Natural killer cell (primary cell): ENCODE measurements at regions of chr7 and their contacts with region 1.

Region 1: DNA sequence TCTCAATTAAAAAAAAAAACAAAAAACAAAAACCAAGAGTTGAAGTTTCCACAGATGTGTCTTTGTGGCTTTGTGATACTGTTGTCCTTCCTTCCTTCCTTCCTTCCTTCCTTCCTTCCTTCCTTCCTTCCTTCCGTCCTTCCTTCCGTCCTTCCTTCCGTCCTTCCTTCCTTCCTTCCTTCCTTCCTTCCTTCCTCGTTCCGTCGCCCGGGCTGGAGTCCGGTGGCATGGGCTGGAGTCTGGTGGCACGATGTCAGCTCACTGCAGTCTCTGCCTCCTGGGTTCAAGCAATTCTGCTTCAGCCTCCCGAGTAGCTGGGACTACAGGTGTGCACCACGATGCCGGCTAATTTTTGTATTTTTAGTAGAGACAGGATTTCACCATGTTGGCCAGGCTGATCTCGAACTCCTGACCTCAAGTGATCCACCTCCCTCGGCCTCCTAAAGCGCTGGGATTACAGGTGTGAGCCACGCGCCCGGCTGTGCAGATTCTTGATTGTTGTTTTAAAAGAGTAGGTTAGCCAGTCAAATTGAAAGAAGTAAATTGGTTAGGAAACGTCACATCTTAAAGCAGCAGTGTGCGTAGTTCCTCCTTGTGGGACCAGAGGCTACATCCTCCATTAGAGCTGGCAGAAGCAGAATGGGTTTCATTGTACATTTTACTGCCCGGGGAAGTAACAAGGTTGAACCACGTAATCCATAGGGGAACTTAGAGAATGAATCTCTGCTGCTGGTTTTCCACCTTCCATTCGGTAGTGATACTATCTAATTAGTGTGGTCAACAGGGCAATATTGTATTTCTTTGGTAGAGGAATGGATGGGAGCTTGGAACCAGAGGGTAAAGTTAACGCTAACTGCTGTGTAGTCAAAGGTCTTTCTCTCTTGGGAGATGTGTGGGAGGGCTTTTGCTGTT is 20.6 kb downstream of the DNAJB6 start:
- DNase-seq: no peak
- ATAC-seq: no peak
- H3K4me3 ChIP-seq: no peak overlapping the region
- H3K4me3 Mint-ChIP-seq: peak overlapping the region; percentile 57
- H3K27ac ChIP-seq: no peak overlapping the region
- H3K27ac Mint-ChIP-seq: peak overlapping the region; percentile 39 to 80
- H3K4me1 ChIP-seq: peaks cover 45% of the 10 kb centered on the region
- H3K4me1 Mint-ChIP-seq: peaks cover 76 to 85% of the 10 kb centered on the region in 2 donors
- H3K27me3 ChIP-seq: no peaks in the 10 kb centered on the region
- H3K27me3 Mint-ChIP-seq: no peaks in the 10 kb centered on the region
- CTCF ChIP-seq: no peak

Region 2: DNA sequence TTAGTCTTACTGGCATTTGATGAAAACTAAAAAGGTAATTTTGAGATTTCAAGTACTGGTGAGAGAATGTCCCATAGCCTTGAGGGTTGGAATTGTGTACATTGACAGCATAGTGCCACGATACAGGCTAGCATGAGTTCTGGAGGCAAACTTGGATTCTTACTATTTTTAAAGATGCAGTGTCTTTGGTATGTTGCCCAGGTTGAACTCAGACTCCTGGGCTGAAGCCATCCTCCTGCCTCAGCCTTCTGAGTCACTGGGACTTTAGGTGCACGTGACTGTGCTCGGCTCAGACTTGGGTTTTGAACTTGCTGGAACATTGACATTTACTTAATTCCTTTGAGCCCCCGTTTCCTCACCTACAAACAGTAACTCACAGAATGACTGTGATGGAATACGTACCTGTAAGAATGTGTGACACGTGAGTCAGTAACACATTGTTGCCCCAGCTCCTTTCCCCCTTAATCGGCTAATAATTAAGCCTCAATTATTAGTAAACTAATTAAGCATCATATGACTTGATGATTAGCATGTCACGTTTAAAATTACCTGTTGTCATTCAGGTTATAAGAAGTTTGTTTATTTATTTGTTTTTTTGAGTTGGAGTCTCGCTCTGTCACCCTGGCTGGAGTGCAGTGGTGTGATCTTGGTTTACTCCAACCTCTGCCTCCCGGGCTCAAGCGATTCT is 10.0 kb before region 1 on chr7:
- intact Hi-C with region 1: loop called (anchors 1 kb)
- DNase-seq: no peak
- ATAC-seq: peak in 1 of 3 donors; percentile 3
- H3K4me3 ChIP-seq: no peak overlapping the region
- H3K4me3 Mint-ChIP-seq: peak overlapping the region; percentile 40
- H3K27ac ChIP-seq: no peak overlapping the region
- H3K27ac Mint-ChIP-seq: peak overlapping the region in 1 of 2 donors; percentile 26
- H3K4me1 ChIP-seq: peaks cover 65% of the 10 kb centered on the region
- H3K4me1 Mint-ChIP-seq: peaks cover 72 to 74% of the 10 kb centered on the region in 2 donors
- H3K27me3 ChIP-seq: no peaks in the 10 kb centered on the region
- H3K27me3 Mint-ChIP-seq: no peaks in the 10 kb centered on the region
- CTCF ChIP-seq: no peak

Region 3: GRCh38 chr7:157384300-157384699 is 26.9 kb after region 1 on chr7:
- intact Hi-C with region 1: no loop called
- DNase-seq: no peak
- ATAC-seq: no peak
- H3K4me3 ChIP-seq: no peak overlapping the region
- H3K4me3 Mint-ChIP-seq: no peak overlapping the region
- H3K27ac ChIP-seq: no peak overlapping the region
- H3K27ac Mint-ChIP-seq: peak overlapping the region; percentile 29 to 65
- H3K4me1 ChIP-seq: peaks cover 14% of the 10 kb centered on the region
- H3K4me1 Mint-ChIP-seq: peaks cover 47 to 59% of the 10 kb centered on the region in 2 donors
- H3K27me3 ChIP-seq: no peaks in the 10 kb centered on the region
- H3K27me3 Mint-ChIP-seq: no peaks in the 10 kb centered on the region
- CTCF ChIP-seq: no peak

Region 4: GRCh38 chr7:157397731-157398691 is 40.6 kb after region 1 on chr7:
- intact Hi-C with region 1: no loop called
- DNase-seq: peak in 1 of 2 donors; percentile 47
- ATAC-seq: peak in 2 of 3 donors; percentile 28 to 38
- H3K4me3 ChIP-seq: no peak overlapping the region
- H3K4me3 Mint-ChIP-seq: peak overlapping the region; percentile 7
- H3K27ac ChIP-seq: no peak overlapping the region
- H3K27ac Mint-ChIP-seq: peak overlapping the region; percentile 63 to 75
- H3K4me1 ChIP-seq: peaks cover 23% of the 10 kb centered on the region
- H3K4me1 Mint-ChIP-seq: peaks cover 20 to 51% of the 10 kb centered on the region in 2 donors
- H3K27me3 ChIP-seq: no peaks in the 10 kb centered on the region
- H3K27me3 Mint-ChIP-seq: no peaks in the 10 kb centered on the region
- CTCF ChIP-seq: no peak

Region 5: GRCh38 chr7:157423348-157423747 is 66.0 kb after region 1 on chr7:
- intact Hi-C with region 1: no loop called
- DNase-seq: no peak
- ATAC-seq: no peak
- H3K4me3 ChIP-seq: no peak overlapping the region
- H3K4me3 Mint-ChIP-seq: no peak overlapping the region
- H3K27ac ChIP-seq: no peak overlapping the region
- H3K27ac Mint-ChIP-seq: no peak overlapping the region
- H3K4me1 ChIP-seq: no peaks in the 10 kb centered on the region
- H3K4me1 Mint-ChIP-seq: no peaks in the 10 kb centered on the region
- H3K27me3 ChIP-seq: no peaks in the 10 kb centered on the region
- H3K27me3 Mint-ChIP-seq: no peaks in the 10 kb centered on the region
- CTCF ChIP-seq: no peak